ENCODE measurements at regions of chr14 and their contacts with region 1.

Region 1: DNA sequence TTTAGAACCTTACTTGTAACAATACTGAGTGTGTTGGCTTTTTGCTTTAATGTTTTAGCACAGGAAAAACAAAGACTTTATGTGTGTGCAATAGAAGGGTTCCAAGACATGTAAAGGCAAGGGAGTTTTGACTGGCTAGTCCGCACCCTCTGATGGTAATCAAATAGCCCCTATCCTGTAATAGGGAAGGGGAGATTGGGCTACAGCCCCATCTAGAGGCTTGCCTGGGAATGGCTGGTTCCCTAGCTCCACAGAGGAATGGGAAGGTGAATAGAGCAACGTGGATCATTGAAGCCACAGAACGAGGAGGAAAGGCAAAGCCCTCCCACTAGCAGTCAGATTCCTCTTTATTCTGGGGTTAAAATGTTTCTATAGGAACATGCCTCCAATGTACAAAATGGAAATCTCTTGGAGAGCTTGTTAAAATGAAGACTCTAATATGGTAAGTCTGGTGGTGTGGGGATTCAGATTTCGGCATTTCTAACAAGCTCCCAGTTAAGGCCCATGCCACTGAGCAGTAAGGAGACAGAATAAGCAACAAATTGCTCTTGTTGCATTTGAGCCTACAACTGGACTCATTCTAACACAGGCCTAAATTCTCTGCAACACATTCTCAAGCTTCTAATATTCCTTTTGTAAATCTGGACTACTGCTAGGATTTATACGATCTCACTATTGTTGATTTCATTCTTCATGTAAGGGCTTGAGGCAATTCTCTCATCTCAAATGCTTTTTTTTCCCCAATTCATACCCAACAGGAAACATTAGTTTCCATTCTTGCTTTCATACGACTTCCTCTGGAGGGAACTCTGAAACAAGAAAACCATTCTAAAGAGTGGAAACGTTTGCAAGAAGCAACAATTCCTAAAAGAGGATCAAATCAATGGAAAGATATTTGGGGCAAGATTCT is 57.1 kb downstream of the NIN start:
- DNase-seq: peak; percentile 33 to 63
- ATAC-seq: peak; percentile 88 to 93
- H3K4me3 ChIP-seq: no peak overlapping the region
- H3K27ac ChIP-seq: no peak overlapping the region
- H3K4me1 ChIP-seq: peaks cover 5% of the 10 kb centered on the region; the same call in 1 of the 3 replicates
- CTCF ChIP-seq: peak; percentile 74
- EP300 ChIP-seq: no peak
- POLR2A ChIP-seq: no peak
- RAD21 ChIP-seq: peak; percentile 73 to 84

Region 2: GRCh38 chr14:50447461-50447860 is 326.4 kb before region 1 on chr14:
- CTCF ChIA-PET with region 1: no interaction called
- POLR2A ChIA-PET with region 1: no interaction called
- DNase-seq: peak in 1 of 2 experiments; percentile 38
- ATAC-seq: peak in 1 of 2 experiments; percentile 38; a peak in 2 of 6 replicates
- H3K4me3 ChIP-seq: no peak overlapping the region
- H3K27ac ChIP-seq: no peak overlapping the region; a peak in 1 of 6 replicates
- H3K4me1 ChIP-seq: peaks cover 15% of the 10 kb centered on the region
- CTCF ChIP-seq: no peak
- EP300 ChIP-seq: no peak
- POLR2A ChIP-seq: no peak
- RAD21 ChIP-seq: no peak

Region 3: DNA sequence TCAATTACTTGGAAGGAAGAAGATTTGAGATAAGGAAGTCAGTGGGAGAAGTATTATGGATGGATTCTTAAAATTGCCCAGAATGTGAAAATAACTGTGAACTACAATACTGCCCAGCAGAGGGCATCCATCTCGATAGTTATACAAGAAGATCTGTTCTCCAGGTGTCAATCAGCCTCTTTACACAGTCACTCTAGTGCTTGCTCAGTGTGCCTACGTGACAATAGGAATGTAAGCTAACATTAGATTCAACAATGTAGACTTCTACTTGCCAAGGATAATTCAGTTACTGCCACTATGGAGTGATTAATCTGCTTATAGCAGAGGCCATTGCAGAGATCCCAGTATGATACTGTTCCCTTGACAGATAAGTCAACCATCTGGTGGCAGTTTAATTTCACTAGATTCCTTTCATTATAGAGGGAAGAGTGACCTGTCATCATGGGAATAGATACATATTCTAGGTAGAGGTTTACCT is 230.9 kb before region 1 on chr14:
- CTCF ChIA-PET with region 1: interaction called, 36 read pairs
- POLR2A ChIA-PET with region 1: no interaction called
- DNase-seq: peak; percentile 33 to 59
- ATAC-seq: peak; percentile 52 to 82; a peak in 4 of 6 replicates
- H3K4me3 ChIP-seq: no peak overlapping the region
- H3K27ac ChIP-seq: no peak overlapping the region
- H3K4me1 ChIP-seq: no peaks in the 10 kb centered on the region
- CTCF ChIP-seq: peak; percentile 64
- EP300 ChIP-seq: no peak
- POLR2A ChIP-seq: no peak
- RAD21 ChIP-seq: peak; percentile 48 to 49

Region 4: GRCh38 chr14:50619556-50620141 is 154.2 kb before region 1 on chr14:
- CTCF ChIA-PET with region 1: interaction called, 61 read pairs
- POLR2A ChIA-PET with region 1: no interaction called
- DNase-seq: peak; percentile 34 to 55
- ATAC-seq: peak; percentile 94 to 95
- H3K4me3 ChIP-seq: no peak overlapping the region
- H3K27ac ChIP-seq: no peak overlapping the region
- H3K4me1 ChIP-seq: no peaks in the 10 kb centered on the region
- CTCF ChIP-seq: peak; percentile 60
- EP300 ChIP-seq: no peak
- POLR2A ChIP-seq: no peak
- RAD21 ChIP-seq: peak; percentile 60 to 72

Region 5: DNA sequence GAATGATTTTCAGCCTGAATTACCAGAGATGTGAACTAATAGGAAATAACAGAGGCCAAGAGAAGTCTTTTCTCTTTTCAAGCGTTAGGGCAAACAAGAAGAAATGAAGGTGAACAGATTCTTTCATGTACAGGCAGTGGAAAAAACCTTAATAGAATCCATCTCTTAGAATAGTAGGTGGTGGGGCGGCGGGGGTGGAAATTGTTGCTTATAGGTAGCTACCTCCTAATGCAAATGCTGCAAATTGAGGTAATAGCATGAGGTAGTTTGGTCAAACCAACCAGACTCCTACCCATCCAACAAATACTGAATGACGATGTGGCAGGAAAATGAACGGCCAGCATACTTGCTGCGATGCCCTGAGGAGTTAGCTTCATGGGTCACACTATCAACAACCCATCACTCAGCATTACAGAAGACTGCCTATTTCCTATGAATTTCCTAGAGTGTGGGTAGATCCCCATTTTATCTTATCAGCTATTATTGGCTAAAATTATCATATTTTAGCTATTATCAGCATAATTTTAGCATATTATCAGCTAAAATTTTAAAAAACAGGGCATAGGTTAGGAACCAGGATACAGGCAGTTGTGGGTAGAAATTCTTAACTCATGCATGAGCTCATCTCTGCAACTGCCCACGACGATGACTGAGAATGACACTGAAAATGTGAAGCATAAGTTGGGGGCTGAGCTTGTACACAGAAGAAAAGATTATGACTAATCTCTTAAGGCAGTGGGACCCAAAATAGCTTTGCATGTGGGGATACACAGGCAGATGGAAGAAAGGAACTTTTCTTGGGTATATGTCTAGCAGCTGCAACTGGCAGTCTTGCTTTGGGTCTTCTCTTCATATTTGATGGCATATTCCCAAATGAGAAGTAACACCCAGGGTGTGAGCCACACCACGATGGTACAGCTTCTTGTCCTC is 11.6 kb before region 1 on chr14:
- CTCF ChIA-PET with region 1: interaction called, 151 read pairs
- POLR2A ChIA-PET with region 1: interaction called, 13 read pairs
- DNase-seq: no peak
- ATAC-seq: no peak
- H3K4me3 ChIP-seq: no peak overlapping the region
- H3K27ac ChIP-seq: no peak overlapping the region; a peak in 1 of 6 replicates
- H3K4me1 ChIP-seq: peaks cover 15% of the 10 kb centered on the region; the same call in 2 of the 3 replicates
- CTCF ChIP-seq: no peak
- EP300 ChIP-seq: no peak
- POLR2A ChIP-seq: no peak
- RAD21 ChIP-seq: no peak

Region 6: DNA sequence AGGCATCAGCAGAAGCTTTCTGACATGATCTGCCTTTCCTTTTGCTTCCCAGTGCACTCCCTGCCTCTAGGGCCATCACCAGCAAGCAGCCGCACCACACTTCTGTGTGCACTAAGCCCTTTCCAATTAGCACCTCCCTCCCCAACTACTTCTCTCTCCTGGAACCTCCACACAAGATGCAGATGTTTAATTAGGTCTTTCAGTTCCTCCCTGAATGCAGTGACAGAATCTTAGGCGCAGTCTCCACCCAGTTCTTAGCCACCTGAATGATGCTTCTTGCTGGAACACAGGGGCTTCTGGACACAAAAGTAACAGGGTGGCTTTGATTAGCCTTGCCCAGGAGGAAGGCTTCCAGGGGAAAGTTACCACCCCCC is 24.1 kb after region 1 on chr14:
- CTCF ChIA-PET with region 1: interaction called, 53 read pairs
- POLR2A ChIA-PET with region 1: no interaction called
- DNase-seq: no peak
- ATAC-seq: no peak
- H3K4me3 ChIP-seq: no peak overlapping the region
- H3K27ac ChIP-seq: no peak overlapping the region
- H3K4me1 ChIP-seq: peaks cover 34% of the 10 kb centered on the region; the same call in 2 of the 3 replicates
- CTCF ChIP-seq: no peak
- EP300 ChIP-seq: no peak
- POLR2A ChIP-seq: no peak
- RAD21 ChIP-seq: no peak

Measured in A549 (cell line).